ENCODE measurements at regions of chr3 and their contacts with region 1.

Region 1: DNA sequence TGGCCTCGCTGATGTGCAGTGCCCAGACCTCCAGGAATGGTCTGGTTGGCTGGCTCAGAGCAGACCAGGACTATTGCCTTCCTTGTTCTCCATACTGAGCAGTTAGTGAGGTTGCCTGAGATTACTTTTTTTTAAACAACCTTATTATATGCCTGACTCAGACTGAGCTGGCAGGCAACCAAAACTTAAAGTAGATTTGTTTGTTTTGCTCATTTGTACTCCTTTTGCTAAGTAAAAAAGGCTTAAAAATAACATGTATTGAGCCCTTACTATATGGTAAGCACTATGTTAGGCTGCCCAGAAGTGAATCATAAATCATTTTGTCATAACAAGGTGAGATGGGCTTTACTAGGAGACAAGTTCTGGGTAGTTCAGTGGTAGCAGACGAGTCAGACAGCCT is 92.4 kb downstream of the GHSR start:
- DNase-seq: peak; percentile 87
- H3K4me3 ChIP-seq: no peak overlapping the region
- CTCF ChIP-seq: no peak

Region 2: GRCh38 chr3:172239218-172239790 is 116.5 kb before region 1 on chr3:
- in situ Hi-C with region 1: no loop called
- DNase-seq: no peak
- H3K4me3 ChIP-seq: no peak overlapping the region
- CTCF ChIP-seq: no peak

Region 3: GRCh38 chr3:172550347-172550943 is 194.6 kb after region 1 on chr3:
- in situ Hi-C with region 1: no loop called
- DNase-seq: no peak
- H3K4me3 ChIP-seq: no peak overlapping the region
- CTCF ChIP-seq: no peak

Region 4: GRCh38 chr3:172666873-172667694 is 311.2 kb after region 1 on chr3:
- in situ Hi-C with region 1: loop called (anchors 25 kb)
- DNase-seq: peak; percentile 86
- H3K4me3 ChIP-seq: no peak overlapping the region
- CTCF ChIP-seq: peak; percentile 81

Measured in astrocyte of the cerebellum (primary cell).